ENCODE measurements at regions of chr12 and their contacts with region 1.

Region 1: DNA sequence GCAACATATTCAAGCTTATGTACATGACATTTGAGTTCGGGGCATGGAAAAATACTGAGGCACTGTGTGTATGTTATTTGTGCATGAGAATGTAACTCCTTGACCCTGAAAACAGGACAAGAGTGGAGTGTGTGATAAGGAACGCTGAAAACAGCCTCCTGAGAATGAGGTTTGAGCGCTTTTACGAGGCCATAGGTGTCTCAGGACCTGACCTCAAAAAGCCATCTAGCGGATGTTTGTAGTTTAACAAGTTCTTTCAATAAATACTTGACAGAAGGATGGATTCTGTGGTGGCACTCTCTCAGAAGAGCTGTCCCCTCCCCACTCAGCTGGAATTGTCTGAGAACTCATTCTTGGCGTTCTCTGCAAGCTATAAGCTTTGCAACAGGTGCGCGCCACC is 350.5 kb upstream of the TMTC1 start:
- DNase-seq: peak; percentile 3
- ATAC-seq: peak; percentile 69
- H3K4me3 ChIP-seq: no peak overlapping the region
- H3K27ac ChIP-seq: no peak overlapping the region
- H3K4me1 ChIP-seq: no peaks in the 10 kb centered on the region
- H3K27me3 ChIP-seq: no peaks in the 10 kb centered on the region
- CTCF ChIP-seq: peak in 2 of 3 experiments; percentile 27 to 44; a peak in 3 of 6 replicates
- POLR2A ChIP-seq: no peak
- RAD21 ChIP-seq: peak; percentile 40

Region 2: GRCh38 chr12:29309320-29309902 is 824.8 kb before region 1 on chr12:
- CTCF ChIA-PET with region 1: no interaction called
- POLR2A ChIA-PET with region 1: no interaction called
- RAD21 ChIA-PET with region 1: no interaction called
- intact Hi-C with region 1: loop called (anchors 10 kb)
- DNase-seq: peak; percentile 10
- ATAC-seq: no peak
- H3K4me3 ChIP-seq: no peak overlapping the region
- H3K27ac ChIP-seq: no peak overlapping the region
- H3K4me1 ChIP-seq: no peaks in the 10 kb centered on the region
- H3K27me3 ChIP-seq: no peaks in the 10 kb centered on the region
- CTCF ChIP-seq: peak; percentile 28 to 46 (median 29); a peak in 4 of 6 replicates
- POLR2A ChIP-seq: no peak
- RAD21 ChIP-seq: peak; percentile 52

Region 3: GRCh38 chr12:30169839-30170591 is 35.8 kb after region 1 on chr12:
- CTCF ChIA-PET with region 1: no interaction called
- POLR2A ChIA-PET with region 1: no interaction called
- RAD21 ChIA-PET with region 1: no interaction called
- intact Hi-C with region 1: no loop called
- DNase-seq: no peak
- ATAC-seq: no peak
- H3K4me3 ChIP-seq: no peak overlapping the region
- H3K27ac ChIP-seq: no peak overlapping the region
- H3K4me1 ChIP-seq: no peaks in the 10 kb centered on the region
- H3K27me3 ChIP-seq: no peaks in the 10 kb centered on the region
- CTCF ChIP-seq: no peak
- POLR2A ChIP-seq: no peak
- RAD21 ChIP-seq: no peak

Measured in HCT116 (cell line).